Ovary (tissue), 10 donors: ENCODE measurements at regions of chr11 and their contacts with region 1.

Region 1: GRCh38 chr11:64204464-64204989 is 2.0 kb upstream of the FERMT3 start:
- DNase-seq: peak; percentile 91 to 94 (median 93)
- H3K4me3 ChIP-seq: no peak overlapping the region
- H3K27ac ChIP-seq: peak overlapping the region in 1 of 2 donors; percentile 41
- H3K4me1 ChIP-seq: peaks cover 10% of the 10 kb centered on the region
- H3K27me3 ChIP-seq: no peaks in the 10 kb centered on the region
- CTCF ChIP-seq: peak; percentile 58 to 77 (median 65)
- EP300 ChIP-seq: no peak
- POLR2A ChIP-seq: no peak

Region 2: DNA sequence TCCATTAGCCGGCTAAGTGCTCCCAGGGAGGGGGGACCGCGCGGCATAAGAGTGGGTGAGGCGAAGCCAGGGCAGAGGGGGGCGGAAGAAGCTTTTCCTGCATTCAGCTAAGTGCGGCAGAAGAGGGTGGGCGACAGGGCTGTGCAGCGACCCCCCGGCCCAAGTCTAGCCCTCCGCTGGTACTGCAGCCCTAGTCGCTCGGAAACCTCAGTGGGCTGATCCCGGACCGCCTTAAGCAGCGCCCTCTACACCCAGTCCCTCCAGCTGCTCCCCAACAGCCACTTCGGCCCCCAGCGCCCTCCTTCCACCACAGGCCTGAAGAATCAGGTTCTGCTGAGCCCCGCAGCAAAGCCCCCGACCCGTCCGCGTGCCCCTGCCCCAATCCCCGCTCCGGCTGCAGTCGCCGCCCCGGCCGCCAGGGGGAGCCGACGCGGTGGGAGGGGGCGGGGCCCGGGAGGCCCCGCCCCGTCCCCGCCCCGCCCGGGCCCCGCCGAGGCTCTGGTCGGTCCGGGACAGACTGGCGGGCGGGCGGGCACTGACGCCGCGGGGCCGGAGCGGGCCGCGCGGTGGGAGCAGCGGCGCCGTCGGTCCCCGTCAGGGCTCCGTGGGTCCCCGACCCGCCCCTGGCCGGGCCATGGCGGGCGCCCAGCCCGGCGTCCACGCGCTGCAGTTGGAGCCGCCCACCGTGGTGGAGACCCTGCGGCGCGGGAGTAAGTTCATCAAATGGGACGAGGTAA is 46.7 kb after region 1 on chr11 and contains the start of gene PLCB3:
- intact Hi-C with region 1: loop called in 1 of 4 experiments (anchors 5 kb)
- DNase-seq: peak in 4 of 5 donors; percentile 70 to 84 (median 78)
- H3K4me3 ChIP-seq: peak within 1 kb of the TSS; percentile 64
- H3K27ac ChIP-seq: peak within 1 kb of the TSS; percentile 32 to 35
- H3K4me1 ChIP-seq: peaks cover 10% of the 10 kb centered on the region
- H3K27me3 ChIP-seq: no peaks in the 10 kb centered on the region
- CTCF ChIP-seq: peak; percentile 61 to 91 (median 89)
- EP300 ChIP-seq: no peak
- POLR2A ChIP-seq: peak; percentile 60
- total RNA-seq, gene PLCB3: 13.5 to 44.8 (median 29.9) TPM

Region 3: DNA sequence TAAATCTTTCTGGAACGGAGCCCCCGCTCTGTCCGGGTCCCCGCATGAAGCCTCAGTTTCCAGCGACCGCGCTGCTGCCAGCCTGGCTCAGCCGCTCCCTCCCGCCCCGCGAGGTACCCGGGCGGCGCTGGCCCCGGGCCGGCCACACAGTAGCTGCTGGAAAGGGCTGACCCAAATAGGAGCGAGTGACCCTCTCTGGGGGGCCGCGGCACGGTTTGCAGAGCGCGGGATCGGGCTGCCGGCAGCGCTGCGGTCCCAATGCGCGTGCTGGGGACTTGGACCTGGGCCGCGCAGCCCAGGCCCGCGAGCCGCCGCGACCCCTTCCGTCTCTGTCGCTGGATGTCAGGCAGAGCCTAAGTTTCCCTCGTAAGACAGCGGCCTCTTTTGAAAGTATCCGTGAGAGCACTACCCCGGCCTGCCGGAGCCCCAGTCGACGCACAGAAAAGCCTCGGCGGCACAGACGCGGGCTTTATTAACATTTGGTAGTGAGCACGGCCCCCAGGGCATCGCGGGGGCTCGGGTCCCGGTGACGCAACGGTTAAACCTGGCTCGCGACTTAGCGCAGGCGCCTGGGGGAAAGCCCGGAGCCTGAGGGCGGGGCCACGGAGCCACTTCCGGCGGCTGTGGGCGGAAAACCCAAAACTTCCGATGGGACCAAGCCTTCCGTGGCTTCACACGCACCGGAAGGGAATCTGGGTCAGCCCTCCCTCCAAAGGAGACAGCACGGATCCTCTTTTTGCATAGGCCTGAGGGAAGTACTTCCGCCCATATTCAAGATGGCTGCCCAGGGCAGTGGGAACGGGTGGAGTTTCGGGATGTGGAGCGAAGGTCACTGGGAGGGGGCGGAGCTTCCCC is 65.1 kb after region 1 on chr11:
- intact Hi-C with region 1: loop called in 2 of 4 experiments (anchors 10 kb)
- DNase-seq: peak; percentile 97 to 99 (median 98)
- H3K4me3 ChIP-seq: peak overlapping the region; percentile 79
- H3K27ac ChIP-seq: peak overlapping the region; percentile 69 to 90
- H3K4me1 ChIP-seq: peaks cover 9% of the 10 kb centered on the region
- H3K27me3 ChIP-seq: no peaks in the 10 kb centered on the region
- CTCF ChIP-seq: peak in 1 of 3 donors; percentile 29
- EP300 ChIP-seq: peak; percentile 54
- POLR2A ChIP-seq: peak; percentile 15

Region 4: GRCh38 chr11:64304316-64305072 is 100.0 kb after region 1 on chr11:
- intact Hi-C with region 1: loop called in 1 of 4 experiments (anchors 5 kb)
- DNase-seq: peak; percentile 79 to 90 (median 88)
- H3K4me3 ChIP-seq: peak overlapping the region; percentile 48
- H3K27ac ChIP-seq: peak overlapping the region in 1 of 2 donors; percentile 55
- H3K4me1 ChIP-seq: peaks cover 13% of the 10 kb centered on the region
- H3K27me3 ChIP-seq: peaks cover 8% of the 10 kb centered on the region
- CTCF ChIP-seq: peak; percentile 74 to 87 (median 81)
- EP300 ChIP-seq: no peak
- POLR2A ChIP-seq: peak; percentile 5